Activated T-helper 1 cell treated with anti-CD3 and anti-CD28 coated beads, Interleukin-12 subunit alpha, Interleukin-12 subunit beta, Interleukin-2, Interleukin-4 antibody, amounts not matched to agents 30 ng/mL and 10 ng/mL and 1 ng/mL, durations not matched to agents 14 hours and 24 hours and 36 hours (primary cell): ENCODE measurements at regions of chr4 and their contacts with region 1.

Region 1: GRCh38 chr4:42627885-42628646 is 28.8 kb downstream of the ATP8A1 start:
- DNase-seq: peak; percentile 19
- H3K4me3 Mint-ChIP-seq: peak overlapping the region; percentile 34
- H3K27ac Mint-ChIP-seq: peak overlapping the region; percentile 90
- H3K4me1 Mint-ChIP-seq: peaks cover 36% of the 10 kb centered on the region
- H3K27me3 Mint-ChIP-seq: no peaks in the 10 kb centered on the region

Region 2: GRCh38 chr4:42436928-42437565 is 191.0 kb before region 1 on chr4:
- intact Hi-C with region 1: no loop called
- DNase-seq: no peak
- H3K4me3 Mint-ChIP-seq: no peak overlapping the region
- H3K27ac Mint-ChIP-seq: no peak overlapping the region
- H3K4me1 Mint-ChIP-seq: no peaks in the 10 kb centered on the region
- H3K27me3 Mint-ChIP-seq: no peaks in the 10 kb centered on the region

Region 3: GRCh38 chr4:42673082-42673425 is 45.0 kb after region 1 on chr4:
- intact Hi-C with region 1: loop called (anchors 5 kb)
- DNase-seq: no peak
- H3K4me3 Mint-ChIP-seq: peak overlapping the region; percentile 41
- H3K27ac Mint-ChIP-seq: peak overlapping the region; percentile 89
- H3K4me1 Mint-ChIP-seq: peaks cover 37% of the 10 kb centered on the region
- H3K27me3 Mint-ChIP-seq: no peaks in the 10 kb centered on the region